ENCODE measurements at regions of chr1 and their contacts with region 1.

Region 1: DNA sequence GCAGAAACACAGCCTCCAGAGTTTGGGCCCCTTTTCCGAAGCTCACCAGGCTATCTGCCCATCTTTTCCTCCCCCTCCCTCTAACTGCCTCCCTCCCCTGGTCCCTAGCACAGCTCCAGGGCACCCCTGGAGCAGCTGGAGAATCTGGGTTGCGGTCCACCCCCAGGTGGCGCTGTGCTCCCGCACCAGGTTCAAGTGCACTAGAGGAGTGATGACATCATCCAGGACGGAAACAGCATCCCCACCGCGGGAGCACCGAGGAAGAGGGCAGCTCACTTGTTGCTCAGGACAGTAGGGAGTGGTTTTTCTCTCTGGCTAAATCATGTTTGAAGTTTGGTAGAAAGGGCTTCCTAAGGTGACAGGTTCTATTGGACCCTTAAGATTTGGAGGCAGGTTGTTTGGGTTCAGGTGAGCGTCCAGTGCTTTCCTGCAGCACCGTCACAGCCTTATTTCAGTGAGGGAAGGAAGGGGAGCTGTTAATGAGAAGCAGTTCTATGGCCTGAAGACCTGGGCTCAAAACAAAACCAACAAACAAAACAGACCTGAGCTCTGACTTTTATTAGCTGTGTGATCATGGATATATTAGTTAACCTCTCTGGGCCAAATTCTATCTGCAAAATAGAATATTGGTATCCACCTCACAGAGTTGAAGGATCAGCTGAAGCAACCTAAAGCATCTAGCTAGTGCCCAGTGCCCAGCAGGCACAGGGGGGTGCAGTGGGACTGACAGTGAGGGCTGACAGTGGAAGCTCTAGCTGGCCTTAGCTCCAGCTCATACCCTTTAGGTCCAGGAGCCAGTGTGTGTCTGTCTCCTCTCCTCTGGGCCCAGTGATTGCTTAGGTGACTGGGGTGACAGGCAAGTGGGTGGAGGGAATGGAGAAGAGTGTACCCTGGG is 7.5 kb downstream of the SHISA4 start:
- DNase-seq: peak; percentile 51 to 89 (median 80)
- ATAC-seq: peak; percentile 96
- H3K4me3 ChIP-seq: no peak overlapping the region
- H3K4me3 Mint-ChIP-seq: peak overlapping the region; percentile 56
- H3K27ac ChIP-seq: no peak overlapping the region
- H3K27ac Mint-ChIP-seq: peak overlapping the region; percentile 66
- H3K4me1 ChIP-seq: no peaks in the 10 kb centered on the region
- H3K4me1 Mint-ChIP-seq: peaks cover 5% of the 10 kb centered on the region
- H3K27me3 ChIP-seq: peaks cover 0 to 3% of the 10 kb centered on the region in 2 experiments
- H3K27me3 Mint-ChIP-seq: peaks cover 36% of the 10 kb centered on the region
- CTCF ChIP-seq: peak; percentile 79

Region 2: GRCh38 chr1:201696217-201696761 is 199.9 kb before region 1 on chr1:
- CTCF ChIA-PET with region 1: no interaction called
- POLR2A ChIA-PET with region 1: no interaction called
- intact Hi-C with region 1: no loop called
- DNase-seq: no peak
- ATAC-seq: no peak
- H3K4me3 ChIP-seq: no peak overlapping the region
- H3K4me3 Mint-ChIP-seq: no peak overlapping the region
- H3K27ac ChIP-seq: no peak overlapping the region
- H3K27ac Mint-ChIP-seq: no peak overlapping the region
- H3K4me1 ChIP-seq: no peaks in the 10 kb centered on the region
- H3K4me1 Mint-ChIP-seq: no peaks in the 10 kb centered on the region
- H3K27me3 ChIP-seq: no peaks in the 10 kb centered on the region
- H3K27me3 Mint-ChIP-seq: peaks cover 5% of the 10 kb centered on the region
- CTCF ChIP-seq: no peak

Region 3: GRCh38 chr1:201709564-201710295 is 186.4 kb before region 1 on chr1:
- CTCF ChIA-PET with region 1: no interaction called
- POLR2A ChIA-PET with region 1: no interaction called
- intact Hi-C with region 1: no loop called
- DNase-seq: peak; percentile 21 to 71 (median 56)
- ATAC-seq: peak; percentile 82
- H3K4me3 ChIP-seq: no peak overlapping the region
- H3K4me3 Mint-ChIP-seq: no peak overlapping the region
- H3K27ac ChIP-seq: no peak overlapping the region
- H3K27ac Mint-ChIP-seq: no peak overlapping the region
- H3K4me1 ChIP-seq: no peaks in the 10 kb centered on the region
- H3K4me1 Mint-ChIP-seq: no peaks in the 10 kb centered on the region
- H3K27me3 ChIP-seq: no peaks in the 10 kb centered on the region
- H3K27me3 Mint-ChIP-seq: no peaks in the 10 kb centered on the region
- CTCF ChIP-seq: peak; percentile 64

Region 4: DNA sequence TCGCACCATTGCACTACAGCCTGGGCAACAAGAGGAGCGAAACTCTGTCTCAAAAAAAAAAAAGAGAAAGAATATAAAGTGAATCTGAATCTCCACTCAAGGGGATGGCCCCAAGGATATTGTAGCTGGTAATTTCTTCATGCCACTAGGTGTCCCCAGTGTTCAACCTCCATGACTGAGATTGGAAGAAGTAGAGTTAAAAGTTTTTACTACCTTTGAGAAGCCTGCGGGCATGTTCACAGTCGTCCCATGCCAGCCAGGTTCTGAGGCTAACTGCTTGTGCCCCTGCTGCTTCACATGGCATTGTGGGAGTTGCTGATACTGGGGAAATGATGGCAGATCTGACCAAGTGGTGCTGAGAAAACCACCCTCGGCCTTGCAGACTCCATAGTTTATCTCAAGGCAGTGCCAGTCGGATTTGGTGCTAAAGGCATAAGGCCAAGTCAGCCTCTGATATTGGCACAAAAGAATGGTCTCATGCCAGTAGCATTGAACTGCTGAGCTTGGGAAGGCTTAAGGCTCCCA is 18.2 kb before region 1 on chr1:
- CTCF ChIA-PET with region 1: interaction called, 20 read pairs
- POLR2A ChIA-PET with region 1: interaction called, 3 read pairs
- intact Hi-C with region 1: no loop called
- DNase-seq: peak in 2 of 9 experiments; percentile 34 to 47
- ATAC-seq: peak; percentile 42
- H3K4me3 ChIP-seq: no peak overlapping the region
- H3K4me3 Mint-ChIP-seq: no peak overlapping the region
- H3K27ac ChIP-seq: no peak overlapping the region
- H3K27ac Mint-ChIP-seq: peak overlapping the region; percentile 18
- H3K4me1 ChIP-seq: no peaks in the 10 kb centered on the region
- H3K4me1 Mint-ChIP-seq: no peaks in the 10 kb centered on the region
- H3K27me3 ChIP-seq: no peaks in the 10 kb centered on the region
- H3K27me3 Mint-ChIP-seq: no peaks in the 10 kb centered on the region
- CTCF ChIP-seq: peak; percentile 44

Region 5: GRCh38 chr1:201941420-201942128 is 45.4 kb after region 1 on chr1:
- CTCF ChIA-PET with region 1: interaction called, 3 read pairs
- POLR2A ChIA-PET with region 1: no interaction called
- intact Hi-C with region 1: loop called in 1 of 2 experiments (anchors 5 kb)
- DNase-seq: no peak
- ATAC-seq: no peak
- H3K4me3 ChIP-seq: no peak overlapping the region
- H3K4me3 Mint-ChIP-seq: no peak overlapping the region
- H3K27ac ChIP-seq: no peak overlapping the region
- H3K27ac Mint-ChIP-seq: no peak overlapping the region
- H3K4me1 ChIP-seq: peaks cover 7% of the 10 kb centered on the region
- H3K4me1 Mint-ChIP-seq: peaks cover 10% of the 10 kb centered on the region
- H3K27me3 ChIP-seq: peaks cover 6 to 14% of the 10 kb centered on the region in 2 experiments
- H3K27me3 Mint-ChIP-seq: peaks cover 35% of the 10 kb centered on the region
- CTCF ChIP-seq: no peak

Region 6: DNA sequence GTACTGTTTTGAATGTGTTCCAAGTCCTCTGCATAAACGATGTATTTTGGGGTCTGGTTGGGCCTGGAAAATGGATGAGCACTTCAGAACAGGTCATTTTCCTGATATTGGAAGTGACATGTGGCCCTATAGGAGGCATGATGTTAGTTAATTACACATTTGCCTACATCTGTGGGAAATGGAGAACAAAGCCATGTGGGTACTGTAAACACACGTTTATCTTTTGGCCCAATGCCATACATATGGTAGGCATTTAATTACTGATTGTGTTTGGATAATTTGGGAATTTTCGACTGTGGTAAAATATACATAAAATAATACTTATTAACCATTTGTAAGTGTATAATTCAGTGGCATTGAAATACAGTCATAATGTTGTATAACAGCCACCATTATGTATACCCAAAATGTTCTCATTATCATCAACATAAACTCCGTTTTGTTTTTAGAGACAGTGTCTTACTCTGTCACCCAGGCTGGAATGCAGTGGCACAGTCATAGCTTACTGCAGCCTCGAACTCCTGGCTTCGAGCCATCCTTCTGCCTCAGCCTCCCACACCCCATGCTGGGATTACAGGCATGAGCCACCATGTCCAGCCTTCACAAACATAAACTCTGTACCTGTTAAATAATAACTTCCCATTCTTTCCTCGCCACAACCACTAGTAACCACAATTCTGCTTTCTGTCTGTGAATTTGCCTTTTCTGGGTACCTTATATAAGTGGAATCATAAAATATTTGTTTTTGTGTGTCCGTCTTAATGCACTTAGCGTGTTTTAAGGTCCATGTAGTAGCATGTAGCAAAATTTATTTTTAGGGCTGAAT is 74.4 kb after region 1 on chr1:
- CTCF ChIA-PET with region 1: interaction called, 64 read pairs
- POLR2A ChIA-PET with region 1: no interaction called
- intact Hi-C with region 1: loop called (anchors 1 kb)
- DNase-seq: no peak
- ATAC-seq: no peak
- H3K4me3 ChIP-seq: no peak overlapping the region
- H3K4me3 Mint-ChIP-seq: no peak overlapping the region
- H3K27ac ChIP-seq: no peak overlapping the region
- H3K27ac Mint-ChIP-seq: no peak overlapping the region
- H3K4me1 ChIP-seq: no peaks in the 10 kb centered on the region
- H3K4me1 Mint-ChIP-seq: peaks cover 4% of the 10 kb centered on the region
- H3K27me3 ChIP-seq: no peaks in the 10 kb centered on the region
- H3K27me3 Mint-ChIP-seq: no peaks in the 10 kb centered on the region
- CTCF ChIP-seq: no peak

Region 7: DNA sequence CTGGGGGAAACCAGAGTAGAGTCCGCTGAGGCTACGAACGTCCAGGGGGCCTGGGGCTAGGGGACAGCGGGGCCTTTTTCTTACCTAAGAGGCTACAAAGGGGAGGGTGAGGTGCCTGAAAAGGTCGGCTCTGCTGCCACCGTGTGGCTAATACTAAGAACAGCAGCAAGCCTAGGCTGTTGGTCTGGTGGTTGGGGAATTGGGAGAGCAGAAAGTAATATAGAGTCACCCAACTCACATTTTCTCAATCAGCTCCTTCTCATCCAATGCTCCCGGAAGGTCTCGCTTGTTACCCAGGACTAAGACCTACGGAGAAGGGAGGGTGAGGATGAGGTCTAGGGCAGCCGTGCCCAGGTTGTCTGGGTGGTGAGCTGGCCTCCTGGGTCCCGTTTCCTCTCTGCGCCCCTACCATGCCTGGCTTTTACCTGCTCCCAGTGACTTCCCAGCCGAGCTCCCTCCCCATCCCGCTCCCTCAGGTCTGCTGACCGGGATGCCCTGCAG is 239.1 kb after region 1 on chr1:
- CTCF ChIA-PET with region 1: interaction called, 34 read pairs
- POLR2A ChIA-PET with region 1: no interaction called
- intact Hi-C with region 1: loop called (anchors 1 to 5 kb)
- DNase-seq: peak in 8 of 9 experiments; percentile 36 to 74 (median 52)
- ATAC-seq: peak; percentile 93
- H3K4me3 ChIP-seq: no peak overlapping the region
- H3K4me3 Mint-ChIP-seq: no peak overlapping the region
- H3K27ac ChIP-seq: no peak overlapping the region
- H3K27ac Mint-ChIP-seq: no peak overlapping the region
- H3K4me1 ChIP-seq: no peaks in the 10 kb centered on the region
- H3K4me1 Mint-ChIP-seq: peaks cover 10% of the 10 kb centered on the region
- H3K27me3 ChIP-seq: no peaks in the 10 kb centered on the region
- H3K27me3 Mint-ChIP-seq: no peaks in the 10 kb centered on the region
- CTCF ChIP-seq: peak; percentile 90

Measured in CD8-positive, alpha-beta T cell (primary cell).